B cell (primary cell): ENCODE measurements at regions of chr16 and their contacts with region 1.

Region 1: GRCh38 chr16:66521951-66522771 is 27.8 kb downstream of the TK2 start:
- DNase-seq: peak; percentile 45
- ATAC-seq: peak; percentile 12
- H3K4me3 ChIP-seq: no peak overlapping the region
- H3K4me3 Mint-ChIP-seq: peak overlapping the region; percentile 81
- H3K27ac ChIP-seq: no peak overlapping the region
- H3K27ac Mint-ChIP-seq: peak overlapping the region; percentile 100
- H3K4me1 ChIP-seq: peaks cover 83 to 90% of the 10 kb centered on the region in 2 donors
- H3K4me1 Mint-ChIP-seq: peaks cover 89% of the 10 kb centered on the region
- H3K27me3 ChIP-seq: no peaks in the 10 kb centered on the region
- H3K27me3 Mint-ChIP-seq: no peaks in the 10 kb centered on the region
- CTCF ChIP-seq: no peak

Region 2: DNA sequence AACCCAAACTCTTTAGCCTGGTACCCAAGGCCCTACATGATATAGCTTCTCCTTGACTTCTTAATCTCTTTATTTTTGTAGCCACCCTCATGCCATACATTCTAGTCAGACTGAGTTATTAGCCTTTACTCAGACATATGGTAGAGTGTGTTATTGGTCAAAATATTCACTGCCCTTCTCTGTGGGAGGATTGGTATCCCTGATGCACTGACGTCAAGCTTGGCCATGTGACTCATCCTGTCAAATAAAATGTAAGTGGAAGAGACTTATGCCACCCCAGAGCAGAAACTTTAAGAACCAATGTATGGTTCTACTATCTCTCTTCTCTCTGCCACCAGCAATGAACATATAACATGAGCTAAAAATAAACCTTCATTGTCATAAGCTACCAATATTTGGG is 107.3 kb before region 1 on chr16:
- CTCF ChIA-PET with region 1: no interaction called
- POLR2A ChIA-PET with region 1: no interaction called
- intact Hi-C with region 1: no loop called
- DNase-seq: no peak
- ATAC-seq: no peak
- H3K4me3 ChIP-seq: no peak overlapping the region
- H3K4me3 Mint-ChIP-seq: no peak overlapping the region
- H3K27ac ChIP-seq: no peak overlapping the region
- H3K27ac Mint-ChIP-seq: no peak overlapping the region
- H3K4me1 ChIP-seq: peaks cover 10 to 12% of the 10 kb centered on the region in 2 donors
- H3K4me1 Mint-ChIP-seq: peaks cover 20% of the 10 kb centered on the region
- H3K27me3 ChIP-seq: peaks cover 0 to 8% (median under 1%) of the 10 kb centered on the region in 4 experiments
- H3K27me3 Mint-ChIP-seq: peaks cover 24% of the 10 kb centered on the region
- CTCF ChIP-seq: no peak

Region 3: GRCh38 chr16:66457888-66458287 is 64.3 kb before region 1 on chr16:
- CTCF ChIA-PET with region 1: no interaction called
- POLR2A ChIA-PET with region 1: no interaction called
- intact Hi-C with region 1: no loop called
- DNase-seq: no peak
- ATAC-seq: no peak
- H3K4me3 ChIP-seq: no peak overlapping the region
- H3K4me3 Mint-ChIP-seq: no peak overlapping the region
- H3K27ac ChIP-seq: no peak overlapping the region
- H3K27ac Mint-ChIP-seq: no peak overlapping the region
- H3K4me1 ChIP-seq: no peaks in the 10 kb centered on the region
- H3K4me1 Mint-ChIP-seq: no peaks in the 10 kb centered on the region
- H3K27me3 ChIP-seq: peaks cover 0 to 22% (median 9%) of the 10 kb centered on the region in 4 experiments
- H3K27me3 Mint-ChIP-seq: peaks cover 39% of the 10 kb centered on the region
- CTCF ChIP-seq: no peak

Region 4: GRCh38 chr16:66511615-66512500 is 10.3 kb before region 1 on chr16:
- CTCF ChIA-PET with region 1: interaction called, 11 read pairs
- POLR2A ChIA-PET with region 1: interaction called, 19 read pairs
- intact Hi-C with region 1: loop called (anchors 1 kb)
- DNase-seq: peak; percentile 34
- ATAC-seq: no peak
- H3K4me3 ChIP-seq: no peak overlapping the region
- H3K4me3 Mint-ChIP-seq: no peak overlapping the region
- H3K27ac ChIP-seq: no peak overlapping the region
- H3K27ac Mint-ChIP-seq: peak overlapping the region; percentile 16
- H3K4me1 ChIP-seq: peaks cover 15 to 29% of the 10 kb centered on the region in 2 donors
- H3K4me1 Mint-ChIP-seq: peaks cover 41% of the 10 kb centered on the region
- H3K27me3 ChIP-seq: peaks cover 0 to 3% (median 0%) of the 10 kb centered on the region in 4 experiments
- H3K27me3 Mint-ChIP-seq: peaks cover 3% of the 10 kb centered on the region
- CTCF ChIP-seq: no peak

Region 5: GRCh38 chr16:66539623-66540469 is 17.7 kb after region 1 on chr16:
- CTCF ChIA-PET with region 1: interaction called, 6 read pairs
- POLR2A ChIA-PET with region 1: interaction called, 6 read pairs
- intact Hi-C with region 1: loop called (anchors 1 kb)
- DNase-seq: peak; percentile 62
- ATAC-seq: peak; percentile 80
- H3K4me3 ChIP-seq: peak overlapping the region in 3 of 5 experiments; percentile 2 to 19 (median 2)
- H3K4me3 Mint-ChIP-seq: peak overlapping the region; percentile 62
- H3K27ac ChIP-seq: no peak overlapping the region
- H3K27ac Mint-ChIP-seq: peak overlapping the region; percentile 60
- H3K4me1 ChIP-seq: peaks cover 38 to 43% of the 10 kb centered on the region in 2 donors
- H3K4me1 Mint-ChIP-seq: peaks cover 58% of the 10 kb centered on the region
- H3K27me3 ChIP-seq: no peaks in the 10 kb centered on the region
- H3K27me3 Mint-ChIP-seq: no peaks in the 10 kb centered on the region
- CTCF ChIP-seq: no peak